T-cell (primary cell): ENCODE measurements at regions of chr2 and their contacts with region 1.

Region 1: GRCh38 chr2:71528131-71528591 is 74.8 kb downstream of the DYSF start:
- DNase-seq: no peak
- ATAC-seq: no peak
- H3K4me3 ChIP-seq: no peak overlapping the region
- H3K4me3 Mint-ChIP-seq: no peak overlapping the region
- H3K27ac ChIP-seq: no peak overlapping the region
- H3K27ac Mint-ChIP-seq: no peak overlapping the region
- H3K4me1 ChIP-seq: no peaks in the 10 kb centered on the region
- H3K4me1 Mint-ChIP-seq: no peaks in the 10 kb centered on the region
- H3K27me3 ChIP-seq: peaks cover 0 to 34% of the 10 kb centered on the region in 2 experiments
- H3K27me3 Mint-ChIP-seq: peaks cover 45 to 54% of the 10 kb centered on the region in 2 donors

Region 2: DNA sequence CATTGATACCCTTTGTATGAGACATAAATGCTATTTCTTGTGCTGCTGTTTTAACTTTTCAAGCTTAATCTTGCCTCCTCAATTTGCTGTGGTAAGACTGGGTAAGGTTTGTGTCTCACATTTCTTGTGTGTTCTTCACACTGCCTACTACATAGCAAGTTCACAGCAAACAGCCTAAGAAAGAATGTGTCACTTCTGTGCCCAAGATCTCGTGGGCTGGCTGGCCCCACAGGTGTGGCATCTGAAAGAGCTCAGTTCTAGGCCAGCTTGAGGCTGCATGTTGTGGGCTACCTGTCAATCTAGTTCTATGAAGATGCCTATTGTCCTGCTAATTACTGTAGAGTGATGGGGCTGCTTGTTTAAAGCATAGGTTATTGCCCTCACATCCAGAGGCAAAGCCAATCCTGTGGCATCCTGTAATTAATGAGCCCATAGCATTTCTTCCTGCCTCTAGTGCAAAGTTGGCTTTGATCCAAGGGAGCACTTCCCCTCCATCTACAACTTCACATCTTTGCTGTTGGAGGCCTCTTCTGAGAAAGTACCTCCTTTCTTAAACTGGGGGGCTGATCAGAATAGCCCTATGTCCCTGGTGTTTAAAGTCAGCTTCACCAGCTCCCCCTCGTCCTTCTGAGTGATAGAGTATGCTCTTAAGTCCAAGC is 1525.8 kb before region 1 on chr2:
- CTCF ChIA-PET with region 1: interaction called in 1 of 2 experiments, 16 read pairs
- POLR2A ChIA-PET with region 1: no interaction called
- DNase-seq: peak in 2 of 35 experiments; percentile 13 to 26
- ATAC-seq: no peak
- H3K4me3 ChIP-seq: no peak overlapping the region
- H3K4me3 Mint-ChIP-seq: no peak overlapping the region
- H3K27ac ChIP-seq: peak overlapping the region; percentile 19
- H3K27ac Mint-ChIP-seq: peak overlapping the region; percentile 44 to 73
- H3K4me1 ChIP-seq: peaks cover 2 to 5% of the 10 kb centered on the region in 2 experiments
- H3K4me1 Mint-ChIP-seq: peaks cover 10 to 13% (median 11%) of the 10 kb centered on the region in 3 donors
- H3K27me3 ChIP-seq: no peaks in the 10 kb centered on the region
- H3K27me3 Mint-ChIP-seq: no peaks in the 10 kb centered on the region